ENCODE measurements at regions of chr6 and their contacts with region 1.

Region 1: DNA sequence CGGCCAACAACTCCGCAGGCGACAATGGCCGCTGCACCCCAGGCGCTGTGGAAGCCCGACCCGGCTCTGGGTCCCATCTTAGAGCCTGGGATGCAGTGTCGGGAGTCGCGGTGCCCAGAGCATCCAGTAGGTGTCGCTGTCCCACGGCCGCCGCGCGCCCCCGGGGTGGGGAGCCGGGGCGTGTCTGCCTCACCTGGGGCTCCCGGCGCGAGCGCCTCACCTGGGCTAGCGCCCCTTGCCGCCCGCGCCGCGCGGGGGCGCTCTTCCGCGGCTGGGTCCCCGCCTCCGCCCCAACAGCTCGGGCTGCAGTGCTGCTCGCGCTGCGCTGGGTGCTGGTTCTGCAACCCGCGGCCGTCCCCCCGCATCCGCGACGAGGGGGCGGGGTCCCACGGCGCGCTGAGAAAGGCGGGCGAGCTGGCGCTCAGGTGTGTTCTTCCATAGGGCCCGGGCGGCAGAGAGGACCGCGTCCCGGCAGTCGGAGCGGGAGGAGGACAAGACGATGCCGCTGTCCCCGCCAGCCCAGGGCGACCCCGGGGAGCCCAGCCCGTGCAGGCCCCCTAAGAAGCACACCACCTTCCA is at the start of gene CRYBG1:
- DNase-seq: peak; percentile 23
- H3K4me3 ChIP-seq: peak within 1 kb of the TSS; percentile 2 to 22 (median 17)
- H3K27ac ChIP-seq: no peak within 1 kb of the TSS
- H3K4me1 ChIP-seq: peaks cover 7% of the 10 kb centered on the region
- H3K27me3 ChIP-seq: peaks cover 14 to 23% of the 10 kb centered on the region in 2 experiments
- CTCF ChIP-seq: peak; percentile 83 to 88
- POLR2A ChIP-seq: no peak
- total RNA-seq, gene CRYBG1: 25.0 and 30.1 TPM in 2 replicates

Region 2: GRCh38 chr6:106347341-106347740 is 13.2 kb before region 1 on chr6:
- CTCF ChIA-PET with region 1: interaction called, 13 read pairs
- POLR2A ChIA-PET with region 1: no interaction called
- dilution Hi-C with region 1: no loop called
- intact Hi-C with region 1: no loop called
- DNase-seq: no peak
- H3K4me3 ChIP-seq: no peak overlapping the region
- H3K27ac ChIP-seq: no peak overlapping the region
- H3K4me1 ChIP-seq: no peaks in the 10 kb centered on the region
- H3K27me3 ChIP-seq: peaks cover 2 to 4% of the 10 kb centered on the region in 2 experiments
- CTCF ChIP-seq: no peak
- POLR2A ChIP-seq: no peak

Region 3: DNA sequence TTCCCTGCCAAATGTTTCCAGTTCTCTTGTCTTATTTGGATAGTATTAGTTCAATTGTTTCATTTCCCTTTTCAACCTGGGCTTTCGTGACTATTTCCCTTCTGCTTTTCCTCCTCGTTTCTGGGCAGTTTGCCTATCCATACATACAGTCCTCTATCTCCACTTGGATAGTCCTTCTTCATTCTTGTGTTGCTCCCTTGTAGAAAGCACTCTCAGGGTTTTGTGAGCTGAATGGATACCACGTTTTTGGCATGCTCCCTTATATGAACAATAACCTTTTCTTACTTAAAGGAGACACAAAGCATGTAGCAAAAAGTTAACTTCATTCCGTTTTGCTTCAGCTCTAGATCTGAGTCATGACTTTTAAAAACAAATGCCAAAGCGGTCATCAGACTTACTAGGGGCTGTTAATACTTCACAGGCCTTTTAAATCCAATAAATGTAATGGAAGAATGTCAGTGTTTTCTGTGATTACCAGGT is 16.6 kb after region 1 on chr6:
- CTCF ChIA-PET with region 1: interaction called, 11 read pairs
- POLR2A ChIA-PET with region 1: no interaction called
- dilution Hi-C with region 1: no loop called
- intact Hi-C with region 1: no loop called
- DNase-seq: peak; percentile 84
- H3K4me3 ChIP-seq: no peak overlapping the region
- H3K27ac ChIP-seq: no peak overlapping the region
- H3K4me1 ChIP-seq: peaks cover 14% of the 10 kb centered on the region
- H3K27me3 ChIP-seq: peaks cover 0 to 10% of the 10 kb centered on the region in 2 experiments
- CTCF ChIP-seq: no peak
- POLR2A ChIP-seq: no peak

Region 4: DNA sequence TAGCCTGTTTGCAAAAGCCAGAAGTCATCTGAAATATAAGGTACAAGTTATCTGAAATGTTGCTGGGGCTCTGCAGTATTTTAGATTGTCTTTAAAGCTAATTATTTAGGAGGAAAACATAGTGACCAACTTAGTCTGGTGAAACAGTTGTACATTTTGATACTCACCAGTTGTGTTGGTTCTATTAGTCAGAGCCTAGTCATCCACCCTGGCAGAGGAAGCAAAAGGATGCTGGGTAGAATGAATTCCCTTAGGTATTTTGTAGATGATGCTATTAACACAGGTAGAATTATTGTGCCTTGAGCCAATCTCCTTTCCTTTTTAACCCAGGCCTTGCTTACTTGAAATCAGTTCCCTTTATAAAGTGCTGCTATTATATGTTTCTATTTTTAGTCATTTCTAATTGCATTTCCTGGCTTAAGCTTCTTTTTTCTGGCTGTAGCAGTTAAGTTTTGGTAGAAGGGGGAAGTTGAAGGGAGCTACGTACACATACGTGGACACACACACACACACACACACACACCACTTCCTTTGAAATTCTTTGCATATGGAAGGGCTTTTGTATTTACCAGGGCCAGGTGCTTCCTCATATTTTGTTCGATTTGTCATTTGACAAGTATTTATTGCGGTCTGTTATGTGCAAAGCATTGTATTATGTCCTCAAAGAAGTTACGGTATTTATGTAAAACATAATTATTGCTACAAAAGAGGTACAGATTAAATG is 186.4 kb after region 1 on chr6:
- CTCF ChIA-PET with region 1: no interaction called
- POLR2A ChIA-PET with region 1: no interaction called
- dilution Hi-C with region 1: no loop called
- intact Hi-C with region 1: no loop called
- DNase-seq: peak; percentile 94
- H3K4me3 ChIP-seq: peak overlapping the region in 1 of 3 experiments; percentile 10
- H3K27ac ChIP-seq: peak overlapping the region; percentile 99
- H3K4me1 ChIP-seq: peaks cover 29% of the 10 kb centered on the region
- H3K27me3 ChIP-seq: no peaks in the 10 kb centered on the region
- CTCF ChIP-seq: no peak
- POLR2A ChIP-seq: peak; percentile 30

Region 5: GRCh38 chr6:106979427-106979884 is 619.0 kb after region 1 on chr6:
- CTCF ChIA-PET with region 1: interaction called, 16 read pairs
- POLR2A ChIA-PET with region 1: no interaction called
- dilution Hi-C with region 1: no loop called
- intact Hi-C with region 1: loop called (anchors 1 kb)
- DNase-seq: peak; percentile 78
- H3K4me3 ChIP-seq: no peak overlapping the region
- H3K27ac ChIP-seq: no peak overlapping the region
- H3K4me1 ChIP-seq: no peaks in the 10 kb centered on the region
- H3K27me3 ChIP-seq: peaks cover 11 to 23% of the 10 kb centered on the region in 2 experiments
- CTCF ChIP-seq: peak; percentile 93 to 94
- POLR2A ChIP-seq: no peak

Measured in endothelial cell of umbilical vein (primary cell).